Left ventricle myocardium superior (tissue), 1 donor: ENCODE measurements at regions of chr19 and their contacts with region 1.

Region 1: DNA sequence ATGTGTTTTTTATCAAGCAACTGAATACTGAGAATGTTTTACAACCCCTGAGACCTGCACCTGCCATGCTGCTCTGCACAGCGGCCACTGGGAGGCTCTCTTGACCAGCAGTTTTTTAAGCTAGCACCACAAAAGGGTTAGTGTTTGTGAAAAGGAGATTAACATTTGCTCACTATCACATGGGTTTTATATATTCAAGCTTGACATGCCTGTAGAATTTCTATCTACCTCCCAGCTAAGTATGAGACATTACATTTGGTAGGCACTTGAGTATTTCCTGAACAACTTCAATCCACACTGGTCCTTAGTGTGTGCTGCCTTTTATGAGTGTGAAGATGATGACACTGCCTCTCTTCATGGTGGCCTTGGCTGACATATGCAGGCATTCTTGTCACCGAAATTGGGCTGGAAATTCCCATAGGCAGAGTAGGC is 1238.9 kb downstream of the UQCRFS1 start:
- DNase-seq: peak; percentile 27
- ATAC-seq: no peak

Region 2: GRCh38 chr19:27740396-27740795 is 233.7 kb before region 1 on chr19:
- intact Hi-C with region 1: no loop called
- DNase-seq: no peak
- ATAC-seq: peak; percentile 57

Region 3: DNA sequence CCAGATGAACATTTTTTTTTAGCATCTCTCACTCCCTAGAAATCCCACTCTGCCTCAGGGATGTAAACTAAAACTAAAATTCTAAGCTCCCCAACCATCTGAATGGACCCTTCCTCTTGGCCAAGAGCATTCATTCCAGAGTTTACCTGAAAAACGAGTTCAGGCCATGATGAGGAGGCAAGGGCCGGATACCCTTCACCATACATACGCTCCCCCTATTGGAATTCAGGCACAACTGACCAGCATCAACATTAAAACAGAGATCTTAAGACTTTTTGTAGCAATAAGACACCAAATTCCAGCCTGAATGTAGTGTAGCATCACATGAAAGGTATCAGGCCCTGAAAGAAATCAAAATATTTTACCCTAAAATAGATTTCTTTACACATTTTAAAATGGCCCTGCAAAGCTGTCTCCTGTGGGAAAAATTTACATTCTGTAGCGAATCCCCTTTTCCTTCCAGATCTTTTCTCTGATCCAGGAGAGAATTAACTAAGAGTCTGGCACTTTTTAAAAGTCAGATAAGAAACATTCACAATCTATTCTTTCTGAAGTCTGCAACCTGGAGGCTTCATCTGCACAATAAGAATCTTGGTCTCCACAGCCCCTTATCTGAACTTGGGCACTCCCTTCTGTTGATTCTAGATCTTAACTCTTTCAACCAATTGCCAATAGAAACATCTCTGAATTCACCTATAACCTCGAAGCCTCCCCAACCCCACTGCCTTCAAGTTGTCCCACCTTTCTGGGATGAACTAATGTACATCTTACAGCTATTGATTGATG is 350.4 kb after region 1 on chr19:
- intact Hi-C with region 1: loop called (anchors 5 kb)
- DNase-seq: no peak
- ATAC-seq: no peak